ENCODE measurements at regions of chr16 and their contacts with region 1.

Region 1: DNA sequence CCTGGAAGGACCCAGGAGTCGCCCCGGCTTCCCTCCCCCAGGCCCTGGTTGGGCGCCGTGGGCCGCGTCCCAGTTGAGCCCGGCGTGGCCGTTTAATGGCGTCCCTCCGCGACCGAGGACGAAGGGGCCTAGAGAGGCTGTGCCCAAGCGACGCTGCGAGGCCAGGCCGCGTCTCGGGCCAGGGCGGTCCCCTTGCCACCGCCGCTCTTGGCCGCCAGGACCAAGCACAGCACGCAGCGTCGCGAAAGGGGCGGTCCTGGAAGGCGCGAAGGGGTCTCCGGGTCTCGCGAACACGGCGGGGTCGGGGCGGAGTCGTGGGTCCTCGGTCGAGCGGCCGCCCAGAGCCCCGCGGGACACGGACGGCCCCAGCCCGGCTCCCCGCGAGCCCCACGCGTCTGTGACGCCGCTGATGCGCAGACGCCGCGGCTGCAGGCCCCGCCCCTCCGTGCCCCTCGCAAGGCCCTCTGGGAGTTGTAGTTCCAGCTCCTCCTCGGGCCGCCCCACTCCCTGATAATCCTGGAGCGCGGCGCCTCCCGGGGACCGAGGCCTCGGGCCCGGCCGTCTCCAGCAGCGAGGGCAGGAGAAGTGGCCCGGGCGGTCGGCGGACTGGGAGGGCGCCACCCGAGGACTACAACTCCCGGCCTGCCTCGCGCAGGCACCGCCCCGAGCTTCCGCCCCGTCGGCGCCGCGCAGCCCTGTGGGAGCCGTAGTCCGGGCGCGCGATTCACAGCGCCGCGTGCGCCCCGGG is at the start of gene CAPN15:
- DNase-seq: peak; percentile 89 to 93 (median 91)
- H3K4me3 ChIP-seq: peak within 1 kb of the TSS; percentile 59
- H3K27ac ChIP-seq: peak within 1 kb of the TSS; percentile 92 to 100
- H3K4me1 ChIP-seq: peaks cover 20% of the 10 kb centered on the region
- H3K27me3 ChIP-seq: no peaks in the 10 kb centered on the region
- CTCF ChIP-seq: peak in 1 of 3 donors; percentile 76
- EP300 ChIP-seq: no peak
- POLR2A ChIP-seq: peak; percentile 95
- total RNA-seq, gene CAPN15: 16.9 to 38.9 (median 30.5) TPM

Region 2: DNA sequence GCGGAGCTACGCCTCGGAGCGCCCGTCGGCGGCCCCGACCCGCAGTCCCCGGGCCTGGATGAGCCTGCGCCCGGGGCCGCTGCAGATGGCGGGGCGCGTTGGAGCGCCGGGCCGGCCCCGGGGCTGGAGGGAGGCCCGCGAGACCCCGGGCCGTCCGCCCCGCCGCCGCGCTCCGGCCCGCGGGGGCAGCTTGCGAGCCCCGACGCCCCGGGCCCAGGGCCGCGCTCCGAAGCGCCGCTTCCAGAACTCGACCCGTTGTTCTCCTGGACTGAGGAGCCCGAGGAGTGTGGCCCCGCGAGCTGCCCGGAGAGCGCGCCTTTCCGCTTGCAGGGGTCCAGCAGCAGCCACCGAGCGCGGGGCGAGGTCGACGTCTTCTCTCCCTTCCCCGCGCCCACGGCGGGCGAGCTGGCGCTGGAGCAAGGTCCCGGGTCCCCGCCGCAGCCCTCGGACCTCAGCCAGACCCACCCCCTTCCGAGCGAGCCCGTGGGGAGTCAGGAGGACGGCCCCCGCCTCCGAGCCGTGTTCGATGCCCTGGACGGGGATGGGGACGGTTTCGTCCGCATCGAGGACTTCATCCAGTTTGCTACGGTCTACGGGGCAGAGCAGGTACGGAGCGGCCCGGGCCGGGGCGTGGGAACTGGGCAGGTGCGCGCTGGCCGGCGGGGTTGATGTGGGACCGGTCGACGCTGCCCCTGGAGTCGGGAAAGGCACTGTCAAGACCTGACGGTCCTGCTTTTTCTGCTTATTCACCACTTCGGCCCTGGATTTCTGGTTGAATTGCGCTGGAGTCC is 100.9 kb before region 1 on chr16:
- intact Hi-C with region 1: loop called in 1 of 4 experiments (anchors 1 kb)
- DNase-seq: peak in 4 of 5 donors; percentile 22 to 59 (median 46)
- H3K4me3 ChIP-seq: peak overlapping the region; percentile 58
- H3K27ac ChIP-seq: peak overlapping the region in 1 of 2 donors; percentile 34
- H3K4me1 ChIP-seq: peaks cover 9% of the 10 kb centered on the region
- H3K27me3 ChIP-seq: no peaks in the 10 kb centered on the region
- CTCF ChIP-seq: no peak
- EP300 ChIP-seq: no peak
- POLR2A ChIP-seq: no peak

Region 3: GRCh38 chr16:1691276-1691675 is 1164.1 kb after region 1 on chr16:
- intact Hi-C with region 1: loop called in 1 of 4 experiments (anchors 10 kb)
- DNase-seq: no peak
- H3K4me3 ChIP-seq: no peak overlapping the region
- H3K27ac ChIP-seq: no peak overlapping the region
- H3K4me1 ChIP-seq: no peaks in the 10 kb centered on the region
- H3K27me3 ChIP-seq: no peaks in the 10 kb centered on the region
- CTCF ChIP-seq: no peak
- EP300 ChIP-seq: no peak
- POLR2A ChIP-seq: no peak

Measured in ovary (tissue), 10 donors.